ENCODE measurements at regions of chr7 and their contacts with region 1.

Region 1: DNA sequence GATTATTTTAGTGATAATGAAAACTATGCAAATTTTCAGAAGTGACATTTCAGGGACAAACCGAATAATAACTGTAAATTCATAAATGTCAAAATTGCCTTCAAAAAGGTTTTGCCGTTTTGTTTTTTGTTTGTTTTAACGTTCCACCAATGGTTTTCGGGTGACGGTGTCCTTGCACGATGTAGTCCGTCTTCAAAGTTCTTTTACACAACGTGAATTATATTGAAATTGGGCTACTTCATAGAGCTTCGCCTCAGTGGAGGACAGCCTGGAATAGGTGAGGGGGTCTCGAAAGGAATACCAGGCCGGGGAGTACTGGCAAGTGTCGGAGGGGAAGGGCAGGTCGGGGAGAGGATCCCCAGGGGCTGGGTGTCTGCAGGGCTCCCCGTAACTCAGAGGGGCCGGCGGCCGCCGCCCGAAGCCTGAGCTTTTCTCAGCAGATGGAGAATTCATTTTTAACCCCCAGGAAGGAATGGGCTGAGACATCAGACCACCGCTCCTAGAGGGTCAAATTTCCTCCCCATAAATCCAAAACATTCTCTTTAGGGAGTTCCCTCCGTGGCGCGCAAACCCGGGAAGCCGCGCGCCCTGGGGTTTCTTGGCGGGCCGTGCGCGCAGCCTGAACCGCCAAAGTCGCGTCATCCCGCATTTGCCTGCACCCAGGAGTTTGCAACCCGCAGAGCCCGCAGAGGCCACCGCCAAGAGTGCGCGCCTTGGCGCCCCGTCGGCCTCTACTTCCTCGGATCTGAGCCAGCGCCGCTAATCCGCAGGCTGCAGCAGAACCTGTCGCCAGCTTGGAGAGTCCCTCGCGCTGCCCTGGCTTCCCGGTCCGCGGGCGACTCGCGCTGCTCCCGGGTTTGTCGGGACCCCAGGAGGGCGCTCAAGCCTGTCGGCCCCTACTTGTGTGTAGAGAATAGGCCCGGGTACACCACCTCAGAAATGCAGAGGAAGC is 17.3 kb upstream of the EVX1 start:
- DNase-seq: no peak
- ATAC-seq: no peak
- H3K4me3 ChIP-seq: no peak overlapping the region
- H3K27ac ChIP-seq: no peak overlapping the region
- H3K4me1 ChIP-seq: no peaks in the 10 kb centered on the region
- CTCF ChIP-seq: no peak
- EP300 ChIP-seq: no peak
- POLR2A ChIP-seq: no peak
- RAD21 ChIP-seq: no peak

Region 2: GRCh38 chr7:27202018-27202861 is 23.0 kb before region 1 on chr7:
- CTCF ChIA-PET with region 1: no interaction called
- POLR2A ChIA-PET with region 1: no interaction called
- DNase-seq: no peak
- ATAC-seq: no peak
- H3K4me3 ChIP-seq: no peak overlapping the region
- H3K27ac ChIP-seq: no peak overlapping the region
- H3K4me1 ChIP-seq: peaks cover 15% of the 10 kb centered on the region
- CTCF ChIP-seq: no peak
- EP300 ChIP-seq: no peak
- POLR2A ChIP-seq: no peak
- RAD21 ChIP-seq: no peak

Region 3: GRCh38 chr7:27576360-27576944 is 351.2 kb after region 1 on chr7:
- CTCF ChIA-PET with region 1: interaction called, 10 read pairs
- POLR2A ChIA-PET with region 1: no interaction called
- DNase-seq: peak; percentile 14 to 38
- ATAC-seq: peak; percentile 47 to 78; a peak in 4 of 6 replicates
- H3K4me3 ChIP-seq: no peak overlapping the region
- H3K27ac ChIP-seq: no peak overlapping the region
- H3K4me1 ChIP-seq: peaks cover 7% of the 10 kb centered on the region; the same call in 2 of the 3 replicates
- CTCF ChIP-seq: peak; percentile 85
- EP300 ChIP-seq: no peak
- POLR2A ChIP-seq: no peak
- RAD21 ChIP-seq: peak; percentile 74 to 83

Measured in A549 (cell line).